GM12878 (cell line): ENCODE measurements at regions of chr10 and their contacts with region 1.

Region 1: DNA sequence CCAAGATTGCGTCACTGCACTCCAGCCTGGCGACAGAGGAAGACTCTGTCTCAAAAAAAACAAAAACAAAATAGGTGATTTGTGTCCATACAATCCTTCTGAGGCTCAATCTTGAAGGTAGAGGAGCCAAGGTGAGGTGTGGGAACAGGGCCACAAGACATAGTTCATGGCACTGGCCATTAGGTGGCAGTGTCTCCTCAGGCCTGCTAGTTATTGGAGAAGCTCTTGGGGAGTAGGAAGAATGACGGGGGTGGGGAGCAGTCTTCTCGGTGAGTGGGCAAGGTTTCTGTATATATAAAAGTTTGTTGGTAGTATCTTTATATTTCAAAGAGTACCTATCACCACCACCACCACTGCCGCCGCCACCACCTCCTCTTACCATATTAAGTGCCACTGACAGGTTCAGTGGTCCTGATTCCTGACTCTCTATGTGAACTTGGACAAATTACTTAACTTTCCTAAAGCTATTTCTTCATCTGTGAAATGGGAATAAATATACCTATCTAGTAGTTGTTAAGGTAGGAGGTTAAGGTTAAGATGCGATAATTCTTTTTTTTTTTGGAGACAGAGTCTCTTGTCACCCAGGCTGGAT is 24.0 kb downstream of the CCSER2 start:
- DNase-seq: no peak
- ATAC-seq: peak; percentile 99
- H3K4me3 ChIP-seq: no peak overlapping the region
- H3K27ac ChIP-seq: no peak overlapping the region
- H3K4me1 ChIP-seq: no peaks in the 10 kb centered on the region
- H3K27me3 ChIP-seq: no peaks in the 10 kb centered on the region
- CTCF ChIP-seq: peak; percentile 81 to 90 (median 87)
- EP300 ChIP-seq: no peak
- POLR2A ChIP-seq: no peak
- RAD21 ChIP-seq: peak; percentile 83

Region 2: GRCh38 chr10:83750604-83751003 is 601.7 kb before region 1 on chr10:
- CTCF ChIA-PET with region 1: no interaction called
- POLR2A ChIA-PET with region 1: no interaction called
- RAD21 ChIA-PET with region 1: no interaction called
- SMC1A ChIA-PET with region 1: no interaction called
- in situ Hi-C with region 1: no loop called
- intact Hi-C with region 1: no loop called
- DNase-seq: no peak
- ATAC-seq: no peak
- H3K4me3 ChIP-seq: no peak overlapping the region
- H3K27ac ChIP-seq: no peak overlapping the region
- H3K4me1 ChIP-seq: no peaks in the 10 kb centered on the region
- H3K27me3 ChIP-seq: no peaks in the 10 kb centered on the region
- CTCF ChIP-seq: no peak
- EP300 ChIP-seq: no peak
- POLR2A ChIP-seq: no peak
- RAD21 ChIP-seq: no peak

Region 3: DNA sequence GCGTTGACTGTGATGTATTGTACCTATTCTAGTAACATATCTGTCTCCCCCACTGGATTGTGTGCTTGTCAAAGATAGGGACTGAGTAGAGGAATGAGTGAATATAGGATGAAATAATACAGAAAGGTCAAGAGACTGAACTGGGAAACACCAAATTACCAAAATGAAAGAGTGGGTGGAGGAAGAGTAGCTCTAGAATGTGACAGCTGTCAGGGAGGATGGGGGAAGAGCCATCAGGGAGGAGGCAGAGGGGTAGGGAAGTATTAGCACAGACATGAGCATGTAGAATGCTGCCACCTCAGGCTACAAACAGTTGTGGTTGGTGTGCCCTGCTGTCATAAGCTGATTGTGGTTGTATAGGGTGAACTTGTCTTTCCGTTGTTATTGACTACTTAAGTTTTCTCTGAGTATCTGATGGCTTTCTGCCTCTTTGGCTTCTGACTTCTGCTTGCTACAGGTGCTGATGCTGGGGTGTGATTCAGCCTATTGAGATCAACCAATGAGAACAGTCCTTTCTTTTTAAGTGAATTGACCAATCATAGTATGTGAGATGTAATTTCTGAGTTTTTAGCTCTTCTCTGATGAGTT is 18.4 kb before region 1 on chr10:
- CTCF ChIA-PET with region 1: interaction called, 46 read pairs
- POLR2A ChIA-PET with region 1: no interaction called
- RAD21 ChIA-PET with region 1: interaction called, 4 read pairs
- SMC1A ChIA-PET with region 1: interaction called, 6 read pairs
- in situ Hi-C with region 1: no loop called
- intact Hi-C with region 1: no loop called
- DNase-seq: no peak
- ATAC-seq: peak; percentile 64
- H3K4me3 ChIP-seq: no peak overlapping the region
- H3K27ac ChIP-seq: no peak overlapping the region
- H3K4me1 ChIP-seq: peaks cover 19% of the 10 kb centered on the region
- H3K27me3 ChIP-seq: no peaks in the 10 kb centered on the region
- CTCF ChIP-seq: no peak
- EP300 ChIP-seq: no peak
- POLR2A ChIP-seq: no peak
- RAD21 ChIP-seq: no peak

Region 4: GRCh38 chr10:84341538-84341856 is 10.8 kb before region 1 on chr10:
- CTCF ChIA-PET with region 1: interaction called, 46 read pairs
- POLR2A ChIA-PET with region 1: no interaction called
- RAD21 ChIA-PET with region 1: interaction called, 3 read pairs
- SMC1A ChIA-PET with region 1: interaction called, 5 read pairs
- in situ Hi-C with region 1: no loop called
- intact Hi-C with region 1: no loop called
- DNase-seq: no peak
- ATAC-seq: peak; percentile 52
- H3K4me3 ChIP-seq: no peak overlapping the region
- H3K27ac ChIP-seq: no peak overlapping the region
- H3K4me1 ChIP-seq: no peaks in the 10 kb centered on the region; the same call in 1 of the 2 replicates
- H3K27me3 ChIP-seq: no peaks in the 10 kb centered on the region
- CTCF ChIP-seq: no peak; a peak in 1 of 6 replicates
- EP300 ChIP-seq: no peak
- POLR2A ChIP-seq: no peak
- RAD21 ChIP-seq: no peak

Region 5: DNA sequence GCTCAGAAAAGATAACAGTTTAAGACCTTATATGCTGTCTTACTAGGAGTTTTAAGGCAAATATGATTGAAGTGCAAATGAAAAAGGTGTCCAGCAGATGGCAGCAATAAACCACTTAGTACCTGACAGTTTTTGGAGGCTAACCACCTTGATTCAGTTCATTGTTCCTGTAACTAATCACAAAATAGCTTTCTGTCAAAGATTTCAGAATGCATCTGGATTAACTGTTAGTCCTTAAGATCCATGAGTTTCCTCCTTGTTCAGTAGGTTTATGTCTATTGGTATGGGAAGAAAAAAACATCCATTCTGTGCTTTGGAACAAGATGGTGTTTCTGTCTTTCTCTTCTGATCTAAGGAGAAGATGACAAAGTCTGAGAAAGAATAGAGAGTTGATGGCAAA is 22.7 kb after region 1 on chr10:
- CTCF ChIA-PET with region 1: interaction called, 16 read pairs
- POLR2A ChIA-PET with region 1: no interaction called
- RAD21 ChIA-PET with region 1: no interaction called
- SMC1A ChIA-PET with region 1: interaction called, 3 read pairs
- in situ Hi-C with region 1: no loop called
- intact Hi-C with region 1: no loop called
- DNase-seq: peak; percentile 34
- ATAC-seq: peak; percentile 78
- H3K4me3 ChIP-seq: no peak overlapping the region
- H3K27ac ChIP-seq: no peak overlapping the region
- H3K4me1 ChIP-seq: no peaks in the 10 kb centered on the region
- H3K27me3 ChIP-seq: no peaks in the 10 kb centered on the region
- CTCF ChIP-seq: peak; percentile 58 to 69 (median 60)
- EP300 ChIP-seq: no peak
- POLR2A ChIP-seq: no peak
- RAD21 ChIP-seq: peak; percentile 77

Region 6: GRCh38 chr10:85377029-85377806 is 1024.9 kb after region 1 on chr10:
- CTCF ChIA-PET with region 1: no interaction called
- POLR2A ChIA-PET with region 1: no interaction called
- RAD21 ChIA-PET with region 1: no interaction called
- SMC1A ChIA-PET with region 1: no interaction called
- in situ Hi-C with region 1: no loop called
- intact Hi-C with region 1: no loop called
- DNase-seq: no peak
- ATAC-seq: no peak
- H3K4me3 ChIP-seq: no peak overlapping the region
- H3K27ac ChIP-seq: no peak overlapping the region
- H3K4me1 ChIP-seq: no peaks in the 10 kb centered on the region
- H3K27me3 ChIP-seq: no peaks in the 10 kb centered on the region
- CTCF ChIP-seq: no peak
- EP300 ChIP-seq: no peak
- POLR2A ChIP-seq: no peak
- RAD21 ChIP-seq: no peak